Ascending aorta (tissue), 2 donors: ENCODE measurements at regions of chr1 and their contacts with region 1.

Region 1: DNA sequence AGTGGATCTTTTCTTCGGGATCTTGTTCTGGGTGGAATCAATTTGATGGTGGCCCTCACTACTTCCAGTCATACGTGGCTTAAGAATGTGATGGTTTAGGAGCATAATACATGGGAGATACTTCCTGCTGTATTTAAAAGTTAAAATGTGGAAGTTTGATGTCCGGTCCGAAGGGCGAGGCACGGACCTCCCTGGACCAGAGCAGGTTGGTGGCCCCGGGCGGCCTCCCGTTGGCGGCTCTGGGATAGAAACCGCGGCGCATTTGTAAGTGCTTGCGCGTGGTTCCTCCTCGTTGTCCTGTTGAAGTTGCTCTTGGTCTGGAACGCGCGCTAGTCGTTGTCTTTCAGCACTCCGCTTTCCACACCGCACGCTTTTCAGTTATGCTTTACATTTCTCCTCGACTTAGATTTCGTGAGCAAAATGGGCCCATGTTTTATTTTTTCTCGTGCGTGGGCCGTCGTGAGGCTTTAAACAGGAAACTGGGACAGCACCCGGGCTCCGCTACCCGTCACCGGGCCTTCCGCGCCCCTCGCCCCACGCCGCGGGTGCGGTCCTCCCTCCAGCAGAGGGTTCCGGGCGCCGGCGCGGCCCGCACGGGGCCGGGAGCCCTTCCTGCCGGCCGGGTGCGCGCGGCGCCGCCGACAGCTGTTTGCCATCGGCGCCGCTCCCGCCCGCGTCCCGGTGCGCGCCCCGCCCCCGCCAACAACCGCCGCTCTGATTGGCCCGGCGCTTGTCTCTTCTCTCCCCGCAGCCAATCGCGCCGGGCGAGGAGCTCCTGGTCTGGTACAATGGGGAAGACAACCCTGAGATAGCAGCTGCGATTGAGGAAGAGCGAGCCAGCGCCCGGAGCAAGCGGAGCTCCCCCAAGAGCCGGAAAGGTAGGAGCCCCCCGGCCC is 48.9 kb downstream of the PRDM2 start:
- DNase-seq: peak; percentile 95 to 99
- H3K4me3 ChIP-seq: peak overlapping the region; percentile 72 to 94
- H3K27ac ChIP-seq: peak overlapping the region; percentile 90 to 96
- H3K4me1 ChIP-seq: peaks cover 0 to 25% of the 10 kb centered on the region in 2 donors
- H3K27me3 ChIP-seq: no peaks in the 10 kb centered on the region
- CTCF ChIP-seq: peak in 2 of 3 experiments; percentile 15 to 24

Region 2: DNA sequence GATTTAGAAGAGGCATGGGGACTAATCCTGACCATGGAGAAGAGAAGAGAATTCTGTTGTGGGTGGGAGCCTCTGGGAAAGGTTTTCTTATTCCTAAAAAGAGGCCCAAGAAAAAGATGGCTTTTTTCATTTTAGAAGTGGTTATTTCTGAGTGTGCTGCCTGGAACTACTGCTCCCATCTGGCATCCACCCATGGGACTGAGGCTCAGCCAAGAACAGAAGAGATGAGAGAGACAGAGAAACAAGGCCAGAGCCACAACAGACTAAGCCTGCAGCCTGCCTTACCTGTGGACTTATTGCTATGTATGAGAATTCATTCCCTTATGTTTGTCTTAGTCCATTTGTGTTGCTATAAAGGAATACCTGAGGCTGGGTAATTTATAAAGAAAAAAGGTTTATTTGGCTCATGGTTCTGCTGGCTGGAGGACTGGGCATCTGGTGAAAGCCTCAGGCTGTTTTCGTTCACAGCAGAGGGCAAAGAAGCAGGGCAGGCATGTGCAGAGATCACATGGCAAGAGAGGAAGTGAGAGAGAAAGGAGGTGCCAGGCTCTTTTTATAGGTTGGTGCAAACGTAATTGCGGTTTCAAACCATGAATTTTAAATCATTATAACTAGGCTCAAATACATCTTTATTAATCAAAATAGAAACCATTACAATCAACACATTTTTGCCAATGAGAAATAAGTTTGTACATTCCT is 106.4 kb before region 1 on chr1:
- intact Hi-C with region 1: no loop called
- DNase-seq: no peak
- H3K4me3 ChIP-seq: no peak overlapping the region
- H3K27ac ChIP-seq: no peak overlapping the region
- H3K4me1 ChIP-seq: no peaks in the 10 kb centered on the region
- H3K27me3 ChIP-seq: no peaks in the 10 kb centered on the region
- CTCF ChIP-seq: no peak

Region 3: GRCh38 chr1:13699936-13700520 is 48.8 kb before region 1 on chr1 and contains the start of gene PRDM2:
- intact Hi-C with region 1: loop called (anchors 1 kb)
- DNase-seq: peak in 1 of 2 donors; percentile 78
- H3K4me3 ChIP-seq: peak within 1 kb of the TSS; percentile 91 to 95
- H3K27ac ChIP-seq: peak within 1 kb of the TSS; percentile 98
- H3K4me1 ChIP-seq: peaks cover 0 to 5% of the 10 kb centered on the region in 2 donors
- H3K27me3 ChIP-seq: no peaks in the 10 kb centered on the region
- CTCF ChIP-seq: no peak
- total RNA-seq, gene PRDM2: 27.2 TPM

Region 4: GRCh38 chr1:13792419-13792818 is 43.6 kb after region 1 on chr1:
- intact Hi-C with region 1: loop called (anchors 2 kb)
- DNase-seq: peak in 1 of 2 donors; percentile 55
- H3K4me3 ChIP-seq: no peak overlapping the region
- H3K27ac ChIP-seq: peak overlapping the region; percentile 74 to 80
- H3K4me1 ChIP-seq: peaks cover 3 to 20% of the 10 kb centered on the region in 2 donors
- H3K27me3 ChIP-seq: no peaks in the 10 kb centered on the region
- CTCF ChIP-seq: no peak

Region 5: DNA sequence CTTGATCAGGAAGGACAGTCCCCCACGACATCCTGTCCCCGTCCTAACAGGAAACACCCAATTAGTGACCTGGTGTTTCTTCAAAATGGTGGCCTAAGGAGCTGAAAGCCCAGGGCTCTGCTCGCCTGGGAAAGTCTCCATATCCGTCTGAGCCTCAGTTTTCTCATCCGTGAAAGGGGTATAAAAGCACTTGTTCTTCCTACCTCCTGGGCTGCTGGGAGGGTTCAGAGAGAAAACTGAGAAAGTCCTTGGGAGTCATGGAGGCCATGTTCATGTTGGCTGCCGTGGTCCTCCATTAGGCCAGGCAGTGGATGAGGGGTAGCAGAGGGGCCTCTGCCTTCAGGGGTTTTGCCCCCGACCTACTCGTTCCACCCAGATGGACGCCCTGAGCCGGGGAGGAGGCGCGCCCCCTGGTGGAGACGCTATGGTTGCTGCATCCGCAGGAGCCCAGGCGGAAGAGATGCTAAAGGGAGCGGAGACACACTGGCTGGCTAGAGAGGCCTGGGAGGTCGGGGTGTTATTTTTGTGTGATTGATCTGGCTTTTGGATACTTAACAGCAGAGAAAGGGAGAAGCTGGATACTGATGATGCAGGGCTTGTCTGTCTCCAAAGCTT is 64.6 kb after region 1 on chr1:
- intact Hi-C with region 1: no loop called
- DNase-seq: no peak
- H3K4me3 ChIP-seq: no peak overlapping the region
- H3K27ac ChIP-seq: no peak overlapping the region
- H3K4me1 ChIP-seq: no peaks in the 10 kb centered on the region
- H3K27me3 ChIP-seq: no peaks in the 10 kb centered on the region
- CTCF ChIP-seq: peak; percentile 39 to 59 (median 58)